ENCODE measurements at regions of chr4 and their contacts with region 1.

Region 1: GRCh38 chr4:173529477-173530325 is at the start of gene HAND2:
- DNase-seq: no peak
- ATAC-seq: peak; percentile 76
- H3K4me3 ChIP-seq: peak within 1 kb of the TSS; percentile 52 to 61
- H3K27ac ChIP-seq: no peak within 1 kb of the TSS
- H3K4me1 ChIP-seq: no peaks in the 10 kb centered on the region
- H3K27me3 ChIP-seq: peaks cover 3% of the 10 kb centered on the region; the same call in 1 of the 2 replicates
- CTCF ChIP-seq: no peak
- total RNA-seq, gene HAND2: 0.31 TPM

Region 2: DNA sequence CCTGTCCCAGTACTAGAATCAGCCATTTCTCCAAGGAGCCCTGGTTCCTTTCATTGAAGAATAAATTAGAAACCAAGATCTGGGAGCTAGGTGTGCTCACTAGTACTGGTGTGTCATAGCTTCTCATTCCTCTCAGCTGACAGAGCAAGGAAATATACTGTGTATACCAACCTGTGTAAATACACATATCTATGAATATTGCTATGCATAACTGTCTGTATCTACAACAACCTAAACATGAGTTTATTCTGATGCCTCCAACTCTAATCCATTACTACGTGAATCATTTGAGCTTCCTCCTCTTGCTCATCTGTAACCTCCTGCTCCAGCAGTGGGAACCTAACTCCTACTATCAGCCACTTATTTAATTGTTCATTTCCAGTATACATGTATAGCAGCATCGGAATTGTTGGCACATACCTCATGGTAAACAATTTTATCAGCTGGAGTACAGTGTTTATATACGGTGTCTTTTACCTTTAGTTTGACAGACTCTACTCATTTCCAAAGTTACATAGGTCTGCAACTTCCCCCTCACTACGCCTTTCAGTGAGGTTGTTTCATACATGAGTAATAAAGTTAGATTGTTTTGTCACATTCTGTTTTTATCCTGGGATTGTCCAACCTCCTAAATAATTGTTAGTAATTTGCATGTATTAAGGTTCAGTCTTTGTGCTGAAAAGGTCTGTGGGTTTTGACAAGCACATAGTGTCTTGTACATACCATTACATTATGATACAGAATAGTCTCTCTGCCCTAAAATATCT is 123.7 kb before region 1 on chr4:
- CTCF ChIA-PET with region 1: no interaction called
- POLR2A ChIA-PET with region 1: no interaction called
- in situ Hi-C with region 1: no loop called
- intact Hi-C with region 1: no loop called
- DNase-seq: no peak
- ATAC-seq: no peak
- H3K4me3 ChIP-seq: no peak overlapping the region
- H3K27ac ChIP-seq: no peak overlapping the region
- H3K4me1 ChIP-seq: no peaks in the 10 kb centered on the region
- H3K27me3 ChIP-seq: no peaks in the 10 kb centered on the region
- CTCF ChIP-seq: no peak

Region 3: GRCh38 chr4:173626277-173626676 is 96.6 kb after region 1 on chr4:
- CTCF ChIA-PET with region 1: no interaction called
- POLR2A ChIA-PET with region 1: no interaction called
- in situ Hi-C with region 1: no loop called
- intact Hi-C with region 1: no loop called
- DNase-seq: no peak
- ATAC-seq: no peak
- H3K4me3 ChIP-seq: no peak overlapping the region
- H3K27ac ChIP-seq: no peak overlapping the region
- H3K4me1 ChIP-seq: no peaks in the 10 kb centered on the region
- H3K27me3 ChIP-seq: no peaks in the 10 kb centered on the region
- CTCF ChIP-seq: no peak

Region 4: GRCh38 chr4:173852775-173853174 is 323.1 kb after region 1 on chr4:
- CTCF ChIA-PET with region 1: no interaction called
- POLR2A ChIA-PET with region 1: interaction called, 11 read pairs
- in situ Hi-C with region 1: no loop called
- intact Hi-C with region 1: no loop called
- DNase-seq: no peak
- ATAC-seq: no peak
- H3K4me3 ChIP-seq: no peak overlapping the region
- H3K27ac ChIP-seq: no peak overlapping the region
- H3K4me1 ChIP-seq: no peaks in the 10 kb centered on the region
- H3K27me3 ChIP-seq: no peaks in the 10 kb centered on the region
- CTCF ChIP-seq: no peak